ENCODE measurements at regions of chr15 and their contacts with region 1.

Region 1: DNA sequence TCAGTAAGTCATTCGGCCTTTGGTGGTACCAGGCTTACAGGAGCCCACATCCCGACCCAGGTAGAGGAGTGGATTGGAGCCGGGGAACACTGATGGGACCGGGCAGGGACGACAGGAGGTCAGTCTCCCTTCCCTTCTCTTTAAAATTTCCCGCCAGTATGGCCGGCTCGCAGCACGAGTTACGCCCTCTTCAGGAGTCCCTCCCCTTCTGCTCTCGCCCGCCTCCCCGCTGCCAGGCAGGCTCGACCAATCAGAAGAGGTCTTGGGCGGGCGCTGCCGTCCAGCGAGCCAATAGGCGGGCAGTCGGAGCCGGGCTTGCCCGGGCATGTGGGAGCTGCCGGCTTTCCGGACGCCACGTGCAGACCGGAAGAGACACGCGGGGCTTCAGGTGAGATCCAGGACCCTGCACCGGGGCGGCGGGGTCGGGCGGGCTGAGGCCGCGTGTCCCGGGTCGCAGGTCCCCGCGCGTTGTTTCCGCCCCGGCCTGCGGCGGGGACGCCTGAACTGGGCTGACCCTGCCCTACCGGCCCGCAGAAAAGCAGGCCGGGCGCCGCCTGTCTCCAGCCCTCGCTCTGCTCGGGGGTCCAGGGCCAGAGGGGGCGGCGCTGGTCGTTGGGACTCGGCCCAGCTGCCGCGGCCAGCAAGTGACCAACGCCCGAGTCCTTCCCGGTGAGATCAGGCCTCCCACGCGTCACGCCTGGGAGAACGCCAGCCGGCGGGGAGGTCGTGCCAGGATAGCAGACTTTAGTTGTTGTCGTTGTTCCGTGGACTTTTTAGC is at the start of gene AEN:
- DNase-seq: peak; percentile 86
- ATAC-seq: peak; percentile 89
- H3K4me3 ChIP-seq: peak within 1 kb of the TSS; percentile 83
- H3K27ac ChIP-seq: peak within 1 kb of the TSS; percentile 97
- H3K4me1 ChIP-seq: peaks cover 34% of the 10 kb centered on the region
- H3K27me3 ChIP-seq: no peaks in the 10 kb centered on the region
- CTCF ChIP-seq: no peak
- EP300 ChIP-seq: no peak
- POLR2A ChIP-seq: peak; percentile 92
- RAD21 ChIP-seq: no peak
- polyA plus RNA-seq, gene AEN: 11.7 to 12.0 TPM

Region 2: DNA sequence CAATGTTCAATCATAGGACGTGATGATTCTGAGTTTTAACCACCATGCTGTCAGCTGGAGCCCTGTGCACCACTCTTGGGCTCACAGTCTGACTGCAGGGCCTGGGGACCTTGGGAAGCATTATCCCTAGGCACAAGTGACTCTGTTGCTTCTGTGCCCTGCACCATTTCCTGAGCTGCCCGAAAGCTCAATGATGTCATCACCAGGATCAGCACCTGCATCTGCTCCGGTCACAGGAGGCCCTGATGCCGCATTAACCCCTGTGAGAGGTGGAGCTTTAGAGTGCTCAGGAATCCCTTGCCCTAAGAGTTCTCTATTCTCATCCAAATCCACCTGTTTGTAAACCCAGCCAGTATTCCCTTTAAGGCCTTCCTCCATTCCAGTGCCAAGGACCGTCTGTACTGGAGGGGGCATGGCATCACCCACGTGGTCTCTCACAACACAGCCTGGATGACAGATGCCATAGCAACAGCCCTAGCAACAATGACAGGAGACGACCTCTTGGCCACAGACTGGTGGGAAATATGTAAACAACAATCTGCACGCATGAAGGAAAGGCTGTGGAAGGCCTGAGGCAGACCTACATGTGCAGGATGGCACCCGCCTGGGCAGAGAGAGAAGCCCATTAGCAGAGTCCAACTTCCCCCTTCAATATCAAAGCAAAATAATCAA is 402.5 kb before region 1 on chr15:
- CTCF ChIA-PET with region 1: no interaction called
- POLR2A ChIA-PET with region 1: no interaction called
- RAD21 ChIA-PET with region 1: no interaction called
- SMC1A ChIA-PET with region 1: no interaction called
- in situ Hi-C with region 1: no loop called
- intact Hi-C with region 1: no loop called
- DNase-seq: no peak
- ATAC-seq: no peak
- H3K4me3 ChIP-seq: no peak overlapping the region
- H3K27ac ChIP-seq: no peak overlapping the region
- H3K4me1 ChIP-seq: no peaks in the 10 kb centered on the region
- H3K27me3 ChIP-seq: no peaks in the 10 kb centered on the region; a peak in 1 of 4 replicates
- CTCF ChIP-seq: no peak
- EP300 ChIP-seq: no peak
- POLR2A ChIP-seq: no peak
- RAD21 ChIP-seq: no peak

Region 3: DNA sequence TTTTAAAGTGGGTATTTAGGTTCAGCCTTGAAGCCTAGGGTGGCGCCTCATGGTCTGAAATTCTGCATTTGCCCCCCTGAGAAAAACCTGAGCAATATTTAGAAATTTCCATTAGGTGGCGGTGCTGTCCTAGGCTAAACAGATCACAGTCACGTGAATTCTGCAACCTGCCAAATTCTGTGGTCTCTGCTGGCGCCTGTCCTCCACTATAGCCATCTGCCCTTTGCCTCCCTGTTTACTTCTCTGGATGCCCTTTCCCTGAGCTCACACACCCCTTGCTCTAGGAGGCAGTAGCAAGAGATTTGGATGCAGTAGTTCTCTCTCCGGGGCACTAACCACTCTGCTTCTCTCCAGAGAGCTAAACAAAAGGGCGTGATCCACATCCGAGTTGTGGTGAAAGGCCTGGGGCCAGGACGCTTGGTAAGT is 144.5 kb before region 1 on chr15:
- CTCF ChIA-PET with region 1: interaction called, 14 read pairs
- POLR2A ChIA-PET with region 1: no interaction called
- RAD21 ChIA-PET with region 1: interaction called, 7 read pairs
- SMC1A ChIA-PET with region 1: interaction called, 8 read pairs
- in situ Hi-C with region 1: loop called (anchors 5 kb)
- intact Hi-C with region 1: loop called (anchors 1 kb)
- DNase-seq: no peak
- ATAC-seq: peak; percentile 65
- H3K4me3 ChIP-seq: no peak overlapping the region
- H3K27ac ChIP-seq: no peak overlapping the region
- H3K4me1 ChIP-seq: peaks cover 4% of the 10 kb centered on the region
- H3K27me3 ChIP-seq: no peaks in the 10 kb centered on the region
- CTCF ChIP-seq: peak; percentile 47 to 71 (median 60); a peak in 5 of 6 replicates
- EP300 ChIP-seq: no peak
- POLR2A ChIP-seq: no peak
- RAD21 ChIP-seq: peak; percentile 78

Region 4: DNA sequence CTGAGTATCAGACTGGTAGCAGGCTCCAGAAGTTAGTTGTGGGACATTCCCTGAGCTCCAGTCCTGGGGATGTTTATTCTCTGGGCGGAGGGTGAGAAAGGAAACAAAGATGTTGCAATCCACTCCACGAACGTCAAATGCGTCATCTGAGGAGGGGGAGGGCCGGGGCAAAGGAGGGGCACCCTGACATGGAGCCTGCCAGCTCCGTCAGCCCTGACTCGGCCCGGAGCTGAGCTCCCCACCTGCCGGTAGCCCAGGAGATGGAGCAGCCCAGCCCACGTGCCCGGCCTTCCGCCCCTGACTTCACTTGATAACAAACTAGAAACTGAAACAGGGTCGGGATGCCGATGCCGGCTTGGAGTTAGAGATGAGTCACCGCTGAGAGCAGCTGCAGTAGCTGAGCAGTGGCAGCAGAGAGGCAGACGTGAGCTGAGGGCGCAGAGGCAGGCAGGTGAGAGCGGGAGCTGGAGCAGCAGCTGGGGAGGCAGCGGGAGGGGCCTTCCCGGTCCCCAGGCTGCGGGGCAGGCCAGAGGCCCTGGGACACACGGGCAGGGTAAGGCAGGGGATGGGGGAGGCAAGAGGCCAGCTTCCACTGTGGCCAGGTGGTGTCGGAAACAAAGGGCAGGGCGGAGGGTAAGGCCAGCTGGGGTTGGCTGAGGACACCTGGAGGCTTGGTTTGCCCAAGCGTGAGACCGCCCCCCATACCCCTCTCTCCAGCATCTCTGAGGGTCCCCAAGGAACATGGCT is 17.6 kb after region 1 on chr15 and contains the start of gene ISG20:
- CTCF ChIA-PET with region 1: interaction called, 30 read pairs
- POLR2A ChIA-PET with region 1: interaction called, 8 read pairs
- RAD21 ChIA-PET with region 1: interaction called, 29 read pairs
- SMC1A ChIA-PET with region 1: interaction called, 43 read pairs
- in situ Hi-C with region 1: no loop called
- intact Hi-C with region 1: no loop called
- DNase-seq: peak; percentile 93
- ATAC-seq: peak; percentile 78
- H3K4me3 ChIP-seq: peak within 1 kb of the TSS; percentile 89
- H3K27ac ChIP-seq: peak within 1 kb of the TSS; percentile 99
- H3K4me1 ChIP-seq: peaks cover 69% of the 10 kb centered on the region
- H3K27me3 ChIP-seq: no peaks in the 10 kb centered on the region
- CTCF ChIP-seq: peak; percentile 39 to 53 (median 52); a peak in 4 of 6 replicates
- EP300 ChIP-seq: peak in 1 of 2 experiments; percentile 52; a peak in 2 of 4 replicates
- POLR2A ChIP-seq: peak; percentile 97
- RAD21 ChIP-seq: peak; percentile 51
- polyA plus RNA-seq, gene ISG20: 49.6 to 92.9 TPM

Region 5: DNA sequence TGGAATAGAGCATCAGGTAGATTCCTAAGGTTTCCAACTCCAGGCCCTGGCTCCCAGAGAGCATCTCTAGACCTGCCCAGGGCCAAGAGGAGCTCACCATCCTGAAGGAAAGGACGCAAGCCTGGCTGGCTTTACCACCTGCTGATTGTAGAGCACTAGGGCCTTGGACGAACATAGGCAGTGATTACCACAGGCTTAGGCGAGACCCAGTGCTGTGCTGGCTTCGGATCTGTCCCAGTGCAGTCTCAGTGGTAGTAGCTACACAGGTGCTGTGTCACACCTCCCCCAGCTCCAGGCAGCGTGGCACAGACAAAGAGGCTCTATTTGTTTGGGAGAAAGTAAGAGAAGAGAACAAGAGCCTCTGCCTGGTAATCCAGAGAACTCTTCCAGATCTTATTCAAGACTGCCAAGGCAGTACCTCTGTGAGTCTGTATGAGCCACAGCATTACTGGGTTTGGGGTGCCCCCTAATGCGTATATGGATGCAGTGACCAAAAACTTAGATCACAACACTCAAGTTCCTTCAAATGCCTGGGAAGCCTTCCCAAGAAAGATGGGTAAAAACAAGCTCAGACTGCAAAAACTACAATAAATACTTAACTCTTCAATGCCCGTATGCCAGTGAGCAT is 43.1 kb after region 1 on chr15:
- CTCF ChIA-PET with region 1: interaction called, 79 read pairs
- POLR2A ChIA-PET with region 1: interaction called, 4 read pairs
- RAD21 ChIA-PET with region 1: interaction called, 38 read pairs
- SMC1A ChIA-PET with region 1: interaction called, 37 read pairs
- in situ Hi-C with region 1: no loop called
- intact Hi-C with region 1: loop called (anchors 1 kb)
- DNase-seq: no peak
- ATAC-seq: peak; percentile 91
- H3K4me3 ChIP-seq: no peak overlapping the region
- H3K27ac ChIP-seq: no peak overlapping the region
- H3K4me1 ChIP-seq: no peaks in the 10 kb centered on the region
- H3K27me3 ChIP-seq: no peaks in the 10 kb centered on the region
- CTCF ChIP-seq: peak; percentile 46 to 66 (median 58)
- EP300 ChIP-seq: no peak
- POLR2A ChIP-seq: no peak
- RAD21 ChIP-seq: peak; percentile 81

Region 6: DNA sequence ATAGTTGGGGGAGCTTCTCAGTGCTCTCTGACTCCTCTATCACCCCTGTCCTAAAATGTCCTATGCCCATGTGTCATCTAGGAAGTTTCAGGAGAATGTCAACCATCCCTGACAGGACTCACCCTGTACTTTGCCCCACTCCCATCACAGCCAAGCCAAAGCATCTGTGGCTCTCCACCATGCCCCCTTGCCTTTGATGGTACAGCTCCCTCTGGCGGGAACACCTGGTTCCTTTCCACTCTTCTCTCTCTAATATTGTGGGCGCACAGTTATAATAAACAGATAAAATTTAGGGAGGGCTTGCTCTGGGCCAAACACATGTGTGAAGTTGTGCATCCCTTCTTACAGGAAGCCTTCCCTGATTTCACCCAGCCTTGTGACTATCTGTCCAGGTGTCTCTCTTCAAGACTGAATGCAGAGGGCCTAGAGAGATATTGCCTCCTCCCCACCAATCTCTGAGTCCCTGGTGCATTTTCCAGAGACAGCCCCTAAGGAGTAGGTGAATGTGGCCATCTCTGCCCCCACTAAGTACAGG is 80.4 kb after region 1 on chr15:
- CTCF ChIA-PET with region 1: interaction called, 52 read pairs
- POLR2A ChIA-PET with region 1: interaction called, 3 read pairs
- RAD21 ChIA-PET with region 1: interaction called, 19 read pairs
- SMC1A ChIA-PET with region 1: interaction called, 26 read pairs
- in situ Hi-C with region 1: loop called (anchors 5 kb)
- intact Hi-C with region 1: loop called (anchors 1 kb)
- DNase-seq: no peak
- ATAC-seq: peak; percentile 98
- H3K4me3 ChIP-seq: no peak overlapping the region
- H3K27ac ChIP-seq: no peak overlapping the region
- H3K4me1 ChIP-seq: no peaks in the 10 kb centered on the region
- H3K27me3 ChIP-seq: peaks cover 3 to 4% of the 10 kb centered on the region in 2 experiments
- CTCF ChIP-seq: peak; percentile 67 to 76 (median 73)
- EP300 ChIP-seq: no peak
- POLR2A ChIP-seq: no peak
- RAD21 ChIP-seq: peak; percentile 80

Region 7: GRCh38 chr15:88894348-88894818 is 273.2 kb after region 1 on chr15:
- CTCF ChIA-PET with region 1: no interaction called
- POLR2A ChIA-PET with region 1: no interaction called
- RAD21 ChIA-PET with region 1: no interaction called
- SMC1A ChIA-PET with region 1: no interaction called
- in situ Hi-C with region 1: no loop called
- intact Hi-C with region 1: loop called (anchors 2 kb)
- DNase-seq: no peak
- ATAC-seq: peak; percentile 75
- H3K4me3 ChIP-seq: peak overlapping the region; percentile 38; the same call in 1 of the 2 replicates
- H3K27ac ChIP-seq: no peak overlapping the region
- H3K4me1 ChIP-seq: peaks cover 3% of the 10 kb centered on the region
- H3K27me3 ChIP-seq: peaks cover 0 to 5% of the 10 kb centered on the region in 2 experiments; a peak in 2 of 4 replicates
- CTCF ChIP-seq: peak; percentile 73 to 92 (median 82)
- EP300 ChIP-seq: no peak
- POLR2A ChIP-seq: no peak
- RAD21 ChIP-seq: peak; percentile 48